Activated naive CD4-positive, alpha-beta T cell treated with anti-CD3 and anti-CD28 coated beads, Interleukin-2, amount 10 ng/mL, durations not matched to agents 7 days and 5 days (primary cell): ENCODE measurements at regions of chr18 and their contacts with region 1.

Region 1: GRCh38 chr18:74495581-74496507 is at the start of gene CNDP2:
- DNase-seq: peak; percentile 100
- H3K4me3 Mint-ChIP-seq: peak within 1 kb of the TSS; percentile 82
- H3K27ac Mint-ChIP-seq: peak within 1 kb of the TSS; percentile 95
- H3K4me1 Mint-ChIP-seq: peaks cover 53% of the 10 kb centered on the region
- H3K27me3 Mint-ChIP-seq: peaks cover 23% of the 10 kb centered on the region

Region 2: GRCh38 chr18:74196220-74197119 is 299.4 kb before region 1 on chr18:
- CTCF ChIA-PET with region 1: interaction called, 12 read pairs
- DNase-seq: peak; percentile 63
- H3K4me3 Mint-ChIP-seq: peak overlapping the region; percentile 48
- H3K27ac Mint-ChIP-seq: no peak overlapping the region
- H3K4me1 Mint-ChIP-seq: peaks cover 2% of the 10 kb centered on the region
- H3K27me3 Mint-ChIP-seq: peaks cover 25% of the 10 kb centered on the region

Region 3: GRCh38 chr18:74342416-74343043 is 153.3 kb before region 1 on chr18:
- CTCF ChIA-PET with region 1: interaction called, 47 read pairs
- DNase-seq: peak; percentile 47
- H3K4me3 Mint-ChIP-seq: no peak overlapping the region
- H3K27ac Mint-ChIP-seq: no peak overlapping the region
- H3K4me1 Mint-ChIP-seq: no peaks in the 10 kb centered on the region
- H3K27me3 Mint-ChIP-seq: peaks cover 12% of the 10 kb centered on the region

Region 4: DNA sequence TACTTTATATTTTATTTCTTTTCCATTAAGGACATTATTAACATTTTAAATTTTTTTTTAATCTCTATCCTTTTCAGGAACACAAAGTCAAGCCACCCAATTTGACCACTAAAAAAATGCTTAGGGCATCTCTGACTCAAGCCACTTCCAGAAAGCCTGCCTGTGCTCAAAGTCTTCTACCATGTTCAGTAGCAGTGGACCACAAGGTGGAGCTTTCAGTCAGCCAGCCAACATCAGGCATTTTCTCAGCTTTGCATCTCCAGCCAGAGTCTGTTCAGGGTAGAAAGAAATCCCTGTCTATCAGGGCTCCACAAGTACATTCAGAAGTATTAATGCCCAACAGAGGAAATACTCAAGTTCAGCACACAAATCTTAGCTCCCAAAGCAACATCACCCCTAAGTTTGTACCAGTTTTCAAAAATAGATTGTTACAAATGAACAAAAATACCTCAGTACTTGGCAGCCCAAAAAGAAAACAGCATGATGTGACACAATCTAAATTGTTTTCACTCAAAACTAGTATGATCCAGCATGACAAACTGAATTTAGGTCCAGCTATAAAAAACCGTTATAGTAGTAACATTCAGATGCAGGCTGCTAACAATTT is 142.6 kb before region 1 on chr18:
- CTCF ChIA-PET with region 1: interaction called, 173 read pairs
- DNase-seq: peak; percentile 74
- H3K4me3 Mint-ChIP-seq: no peak overlapping the region
- H3K27ac Mint-ChIP-seq: no peak overlapping the region
- H3K4me1 Mint-ChIP-seq: peaks cover 46% of the 10 kb centered on the region
- H3K27me3 Mint-ChIP-seq: peaks cover 12% of the 10 kb centered on the region

Region 5: GRCh38 chr18:74378179-74378682 is 117.6 kb before region 1 on chr18:
- CTCF ChIA-PET with region 1: interaction called, 12 read pairs
- DNase-seq: peak; percentile 66
- H3K4me3 Mint-ChIP-seq: peak overlapping the region; percentile 41
- H3K27ac Mint-ChIP-seq: peak overlapping the region; percentile 95
- H3K4me1 Mint-ChIP-seq: peaks cover 64% of the 10 kb centered on the region
- H3K27me3 Mint-ChIP-seq: peaks cover 16% of the 10 kb centered on the region

Region 6: DNA sequence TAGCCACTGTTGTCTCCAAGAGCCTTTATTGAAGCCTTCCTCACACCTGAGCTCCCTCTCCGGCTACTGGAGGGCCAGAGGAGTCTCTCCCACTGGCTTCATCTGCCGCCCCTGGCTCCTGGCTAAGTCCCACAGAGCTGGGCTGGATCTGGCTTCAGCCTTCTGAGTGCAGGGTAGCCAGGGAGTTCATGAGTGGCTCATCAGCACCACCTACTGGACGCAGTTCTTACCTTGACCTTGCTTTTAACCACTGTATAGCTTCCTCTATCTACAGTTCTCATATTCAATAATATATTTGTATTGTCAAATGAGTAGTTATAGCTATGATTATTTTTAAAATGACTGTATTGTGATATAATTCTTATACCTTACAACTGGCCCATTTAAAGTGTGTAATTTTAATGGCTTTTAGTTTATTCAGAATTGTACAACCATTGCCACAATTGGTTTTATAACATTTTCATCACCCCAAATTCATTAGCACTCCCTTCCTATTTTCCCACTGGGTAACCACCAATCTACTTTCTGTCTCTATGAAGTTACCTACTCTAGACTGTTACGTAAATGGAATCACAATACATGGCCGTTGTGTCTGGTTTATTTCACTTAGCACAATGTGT is 56.2 kb after region 1 on chr18:
- CTCF ChIA-PET with region 1: interaction called, 12 read pairs
- DNase-seq: peak; percentile 87
- H3K4me3 Mint-ChIP-seq: no peak overlapping the region
- H3K27ac Mint-ChIP-seq: no peak overlapping the region
- H3K4me1 Mint-ChIP-seq: no peaks in the 10 kb centered on the region
- H3K27me3 Mint-ChIP-seq: peaks cover 30% of the 10 kb centered on the region

Region 7: GRCh38 chr18:74669136-74669798 is 173.4 kb after region 1 on chr18:
- CTCF ChIA-PET with region 1: no interaction called
- DNase-seq: no peak
- H3K4me3 Mint-ChIP-seq: no peak overlapping the region
- H3K27ac Mint-ChIP-seq: no peak overlapping the region
- H3K4me1 Mint-ChIP-seq: no peaks in the 10 kb centered on the region
- H3K27me3 Mint-ChIP-seq: no peaks in the 10 kb centered on the region

Region 8: GRCh38 chr18:74702950-74703349 is 207.1 kb after region 1 on chr18:
- CTCF ChIA-PET with region 1: no interaction called
- DNase-seq: no peak
- H3K4me3 Mint-ChIP-seq: no peak overlapping the region
- H3K27ac Mint-ChIP-seq: no peak overlapping the region
- H3K4me1 Mint-ChIP-seq: no peaks in the 10 kb centered on the region
- H3K27me3 Mint-ChIP-seq: no peaks in the 10 kb centered on the region